Activated naive CD4-positive, alpha-beta T cell treated with anti-CD3 and anti-CD28 coated beads for 36 hours (primary cell): ENCODE measurements at regions of chr17 and their contacts with region 1.

Region 1: GRCh38 chr17:7844292-7845154 is 10.3 kb upstream of the TMEM88 start:
- DNase-seq: peak; percentile 90
- H3K4me3 Mint-ChIP-seq: peak overlapping the region; percentile 89
- H3K27ac Mint-ChIP-seq: peak overlapping the region; percentile 99
- H3K4me1 Mint-ChIP-seq: peaks cover 46% of the 10 kb centered on the region
- H3K27me3 Mint-ChIP-seq: no peaks in the 10 kb centered on the region

Region 2: GRCh38 chr17:7239091-7240027 is 605.2 kb before region 1 on chr17 and contains the start of gene PHF23:
- CTCF ChIA-PET with region 1: no interaction called
- intact Hi-C with region 1: loop called (anchors 5 kb)
- DNase-seq: peak; percentile 99
- H3K4me3 Mint-ChIP-seq: peak within 1 kb of the TSS; percentile 94
- H3K27ac Mint-ChIP-seq: peak within 1 kb of the TSS; percentile 98
- H3K4me1 Mint-ChIP-seq: peaks cover 64% of the 10 kb centered on the region
- H3K27me3 Mint-ChIP-seq: no peaks in the 10 kb centered on the region
- total RNA-seq, gene PHF23: 8.4 to 10.0 TPM

Region 3: DNA sequence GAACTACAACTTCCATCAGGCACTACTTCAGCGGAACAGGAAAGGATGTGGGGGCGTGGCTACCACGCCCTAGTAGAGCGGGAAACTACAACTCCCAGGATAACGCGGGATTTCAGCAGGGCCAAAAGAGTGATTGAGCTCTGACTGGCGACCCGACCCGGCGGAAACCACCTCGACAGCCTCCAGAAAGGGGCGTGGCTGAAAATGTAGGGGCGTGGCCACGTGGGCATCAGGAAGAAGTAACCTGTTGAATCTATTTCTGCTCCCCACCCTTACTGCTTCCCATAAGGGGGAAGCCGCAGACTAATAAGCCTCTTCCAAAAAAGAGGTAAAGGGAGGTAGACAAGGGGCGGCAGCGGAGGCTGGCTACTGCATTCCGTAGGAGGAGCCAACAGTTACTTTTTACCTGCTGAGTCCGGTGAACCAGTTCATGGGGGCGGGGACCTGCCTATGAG is 409.3 kb before region 1 on chr17 and contains the start of gene TMEM102:
- CTCF ChIA-PET with region 1: no interaction called
- intact Hi-C with region 1: loop called (anchors 5 kb)
- DNase-seq: peak; percentile 99
- H3K4me3 Mint-ChIP-seq: peak within 1 kb of the TSS; percentile 92
- H3K27ac Mint-ChIP-seq: peak within 1 kb of the TSS; percentile 91
- H3K4me1 Mint-ChIP-seq: peaks cover 36% of the 10 kb centered on the region
- H3K27me3 Mint-ChIP-seq: peaks cover 12% of the 10 kb centered on the region
- total RNA-seq, gene TMEM102: 3.3 to 3.5 TPM

Region 4: DNA sequence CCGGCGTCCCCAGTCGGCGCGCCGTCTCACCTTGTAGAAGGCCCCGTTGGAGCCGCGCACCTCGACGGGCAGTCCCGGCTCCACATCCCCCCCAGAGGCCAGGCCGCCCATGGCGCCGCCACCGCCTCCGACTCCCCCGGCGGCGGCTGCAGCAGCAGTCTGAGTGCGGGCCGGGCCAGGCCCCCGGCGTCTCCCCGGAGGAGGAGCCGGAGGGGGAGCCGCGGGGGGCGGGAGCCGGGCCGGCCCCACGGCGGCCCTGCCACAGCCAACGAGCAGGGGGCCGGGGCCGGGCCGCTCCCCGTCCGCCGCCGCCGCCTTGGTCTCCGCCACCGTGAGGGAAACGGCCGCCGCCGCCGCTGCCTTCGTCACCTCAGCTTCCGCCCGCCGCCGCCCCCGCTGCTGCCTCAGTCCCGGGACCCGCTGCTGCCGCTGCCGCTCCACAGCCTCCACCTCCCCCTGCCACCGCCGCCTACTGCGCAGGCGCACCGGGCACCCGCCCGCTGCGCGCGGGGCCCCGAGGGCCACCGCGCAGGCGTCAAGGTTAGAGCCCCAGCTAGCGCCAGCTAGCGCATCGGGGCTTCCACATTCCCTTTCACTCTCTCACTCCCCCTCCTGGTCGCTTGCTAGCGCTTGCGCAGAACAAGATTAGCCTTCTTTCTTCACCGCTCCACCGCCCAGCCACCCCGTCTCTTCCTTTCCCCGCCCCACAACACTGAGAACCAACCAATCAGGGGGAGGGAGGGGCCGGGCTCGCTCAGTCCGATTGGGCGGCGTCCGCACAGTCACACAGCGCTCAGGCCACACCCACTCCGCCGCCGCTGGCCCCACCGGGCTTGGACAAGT is 229.9 kb before region 1 on chr17 and contains the start of gene FXR2:
- CTCF ChIA-PET with region 1: no interaction called
- intact Hi-C with region 1: loop called (anchors 5 kb)
- DNase-seq: peak; percentile 100
- H3K4me3 Mint-ChIP-seq: peak within 1 kb of the TSS; percentile 83
- H3K27ac Mint-ChIP-seq: peak within 1 kb of the TSS; percentile 84
- H3K4me1 Mint-ChIP-seq: peaks cover 32% of the 10 kb centered on the region
- H3K27me3 Mint-ChIP-seq: no peaks in the 10 kb centered on the region
- total RNA-seq, gene FXR2: 29.7 to 36.8 TPM

Region 5: GRCh38 chr17:8138672-8139371 is 294.3 kb after region 1 on chr17:
- CTCF ChIA-PET with region 1: no interaction called
- intact Hi-C with region 1: loop called (anchors 5 kb)
- DNase-seq: peak; percentile 98
- H3K4me3 Mint-ChIP-seq: no peak overlapping the region
- H3K27ac Mint-ChIP-seq: no peak overlapping the region
- H3K4me1 Mint-ChIP-seq: peaks cover 13% of the 10 kb centered on the region
- H3K27me3 Mint-ChIP-seq: no peaks in the 10 kb centered on the region

Region 6: GRCh38 chr17:8248751-8249607 is 404.5 kb after region 1 on chr17 and contains the start of gene PFAS:
- CTCF ChIA-PET with region 1: no interaction called
- intact Hi-C with region 1: loop called (anchors 2 kb)
- DNase-seq: peak; percentile 97
- H3K4me3 Mint-ChIP-seq: peak within 1 kb of the TSS; percentile 99
- H3K27ac Mint-ChIP-seq: peak within 1 kb of the TSS; percentile 100
- H3K4me1 Mint-ChIP-seq: peaks cover 37% of the 10 kb centered on the region
- H3K27me3 Mint-ChIP-seq: no peaks in the 10 kb centered on the region
- total RNA-seq, gene PFAS: 106 to 110 TPM